Left colon (tissue), 2 donors: ENCODE measurements at regions of chr12 and their contacts with region 1.

Region 1: GRCh38 chr12:119412811-119413794 is 78.6 kb downstream of the CCDC60 start:
- DNase-seq: peak in 1 of 2 donors; percentile 70
- ATAC-seq: no peak

Region 2: DNA sequence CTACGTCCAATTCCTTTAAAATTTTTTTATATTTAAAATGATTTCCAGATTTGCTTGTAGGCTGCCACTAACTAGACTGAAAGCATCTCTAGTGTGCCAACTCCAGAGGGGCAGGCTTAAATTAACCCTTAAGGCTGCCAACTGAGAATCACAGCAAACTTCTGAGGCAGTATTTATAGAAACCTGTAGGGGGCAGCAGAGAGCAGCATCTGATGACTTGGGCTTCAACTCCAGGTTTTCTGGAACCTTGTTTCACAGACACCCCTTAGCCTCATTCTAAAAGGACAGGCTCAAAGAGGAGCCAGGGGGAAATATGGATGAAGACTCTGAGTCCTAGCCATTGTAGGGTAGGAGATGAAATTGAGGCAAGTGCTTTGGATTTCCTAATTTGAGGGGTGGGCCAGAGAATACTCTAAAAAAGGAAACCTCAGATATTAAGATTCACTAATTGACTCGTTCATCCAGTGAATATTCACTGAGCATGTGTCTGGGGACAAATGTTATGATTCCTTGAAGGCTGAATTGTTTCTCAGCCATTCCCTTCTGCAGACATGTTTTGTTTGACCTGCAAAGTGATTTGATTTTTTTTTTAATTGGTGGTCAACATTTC is 297.7 kb before region 1 on chr12:
- intact Hi-C with region 1: loop called (anchors 5 to 10 kb)
- DNase-seq: peak in 1 of 2 donors; percentile 6
- ATAC-seq: no peak

Region 3: DNA sequence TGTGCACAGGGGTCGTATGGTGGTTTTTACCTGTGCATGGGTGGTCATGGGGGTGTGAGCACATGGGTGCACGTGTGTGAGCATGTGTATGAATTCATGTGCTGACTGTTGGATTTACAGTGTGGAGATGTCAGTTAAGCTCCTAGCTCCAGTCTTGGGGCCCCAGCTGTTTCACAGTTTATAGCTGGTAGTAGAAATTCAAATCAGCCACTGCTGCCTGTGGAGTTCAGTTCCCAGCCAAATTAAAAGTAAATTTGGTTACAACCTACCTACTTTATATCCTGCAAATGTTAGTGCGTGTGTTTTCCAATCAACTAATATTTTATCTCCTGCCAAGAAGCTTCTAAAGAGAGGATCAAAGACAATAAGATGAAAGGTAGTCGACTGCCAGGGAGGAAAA is 290.4 kb before region 1 on chr12:
- intact Hi-C with region 1: loop called (anchors 5 to 10 kb)
- DNase-seq: no peak
- ATAC-seq: no peak